Head of caudate nucleus (tissue), 42 donors: ENCODE measurements at regions of chr9 and their contacts with region 1.

Region 1: GRCh38 chr9:113876151-113876992 is at the start of gene ZNF618:
- DNase-seq: peak in 35 of 42 donors; percentile 9 to 69 (median 31)

Region 2: DNA sequence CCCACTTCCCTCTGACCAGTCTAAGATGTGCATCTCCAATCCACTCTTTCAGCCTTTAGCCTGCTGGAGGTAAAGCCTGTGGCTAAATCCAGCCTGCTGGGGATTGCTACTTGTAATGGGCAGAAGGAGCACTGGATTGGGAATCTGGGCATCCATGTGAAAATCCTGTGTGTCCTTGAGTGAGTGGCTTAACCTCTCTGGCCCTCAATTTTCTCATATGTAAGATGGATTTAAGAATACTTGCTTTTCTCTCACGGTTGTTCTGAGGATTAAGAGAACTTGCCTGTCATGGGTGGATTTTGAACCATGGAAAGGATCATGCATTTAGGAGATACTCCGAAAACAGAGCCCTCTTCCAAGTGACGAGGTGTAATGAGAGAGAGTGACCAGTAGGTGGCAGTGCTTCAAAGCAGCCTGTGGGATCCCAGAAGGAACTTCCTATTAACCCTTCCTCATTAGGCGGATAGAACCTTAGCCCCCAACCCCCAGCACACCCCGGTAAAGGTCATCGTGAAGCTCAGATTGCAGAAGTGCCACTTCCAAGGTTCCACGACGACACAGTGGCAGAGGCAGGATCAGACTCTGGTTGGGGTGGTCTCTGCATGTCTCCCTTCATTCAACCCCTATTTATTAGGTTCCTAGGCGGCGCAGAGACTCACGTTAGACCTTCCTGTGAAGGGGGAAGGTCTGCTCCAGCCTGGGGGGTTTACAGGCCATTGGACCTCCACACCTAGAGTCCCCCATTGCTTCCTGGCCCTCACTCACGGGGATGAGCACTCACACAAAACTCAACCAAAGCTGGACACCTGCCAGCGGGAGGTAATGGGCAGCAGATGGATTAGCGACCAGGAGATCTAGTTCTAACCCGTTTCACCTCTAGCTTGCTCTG is 69.0 kb before region 1 on chr9:
- intact Hi-C with region 1: loop called (anchors 5 kb)
- DNase-seq: peak in 39 of 42 donors; percentile 25 to 84 (median 61)

Region 3: DNA sequence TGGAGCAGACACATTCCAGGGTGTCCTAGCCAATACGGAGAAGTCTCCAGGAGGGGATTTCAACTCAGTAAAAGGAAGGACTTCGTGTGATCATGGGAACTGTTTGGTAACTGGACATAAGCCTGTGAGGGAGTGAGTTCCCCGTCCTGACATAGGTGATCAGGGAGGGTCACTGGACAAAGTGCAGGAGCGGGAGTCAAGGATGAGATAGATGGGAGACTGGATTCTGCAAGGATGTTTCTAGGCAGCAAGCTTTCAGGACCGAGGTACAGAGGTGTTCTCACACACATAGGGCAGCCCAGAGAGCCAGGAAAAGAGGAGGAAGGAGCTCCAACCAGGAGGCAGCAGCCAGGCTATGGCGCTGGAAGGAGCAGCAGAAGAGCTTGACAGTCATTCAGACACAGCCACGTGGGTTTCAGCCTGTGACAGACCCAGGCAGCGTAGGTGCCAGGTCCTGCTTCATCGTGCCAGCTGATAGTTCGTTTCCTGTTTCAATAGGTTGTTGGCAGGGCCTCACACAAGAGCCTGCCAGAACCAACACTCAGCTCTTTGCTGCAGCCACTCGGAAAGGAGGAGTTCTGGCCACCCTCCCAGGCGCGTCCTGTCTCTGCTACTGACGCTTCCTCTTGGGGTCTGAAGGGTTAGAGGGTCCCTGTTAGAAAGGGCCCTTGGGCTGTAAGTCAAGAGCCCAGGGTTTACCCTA is 117.6 kb after region 1 on chr9:
- intact Hi-C with region 1: loop called (anchors 10 kb)
- DNase-seq: peak; percentile 38 to 88 (median 70)